Activated B cell treated with CpG ODN at 0.5 μM for 24 hours (primary cell): ENCODE measurements at regions of chr9 and their contacts with region 1.

Region 1: GRCh38 chr9:131627648-131628458 is 82.5 kb downstream of the PRRT1B start:
- DNase-seq: peak; percentile 55
- ATAC-seq: peak; percentile 68
- H3K4me3 Mint-ChIP-seq: peak overlapping the region; percentile 74
- H3K27ac Mint-ChIP-seq: peak overlapping the region; percentile 93
- H3K4me1 Mint-ChIP-seq: peaks cover 71% of the 10 kb centered on the region
- H3K27me3 Mint-ChIP-seq: no peaks in the 10 kb centered on the region
- CTCF ChIP-seq: no peak

Region 2: DNA sequence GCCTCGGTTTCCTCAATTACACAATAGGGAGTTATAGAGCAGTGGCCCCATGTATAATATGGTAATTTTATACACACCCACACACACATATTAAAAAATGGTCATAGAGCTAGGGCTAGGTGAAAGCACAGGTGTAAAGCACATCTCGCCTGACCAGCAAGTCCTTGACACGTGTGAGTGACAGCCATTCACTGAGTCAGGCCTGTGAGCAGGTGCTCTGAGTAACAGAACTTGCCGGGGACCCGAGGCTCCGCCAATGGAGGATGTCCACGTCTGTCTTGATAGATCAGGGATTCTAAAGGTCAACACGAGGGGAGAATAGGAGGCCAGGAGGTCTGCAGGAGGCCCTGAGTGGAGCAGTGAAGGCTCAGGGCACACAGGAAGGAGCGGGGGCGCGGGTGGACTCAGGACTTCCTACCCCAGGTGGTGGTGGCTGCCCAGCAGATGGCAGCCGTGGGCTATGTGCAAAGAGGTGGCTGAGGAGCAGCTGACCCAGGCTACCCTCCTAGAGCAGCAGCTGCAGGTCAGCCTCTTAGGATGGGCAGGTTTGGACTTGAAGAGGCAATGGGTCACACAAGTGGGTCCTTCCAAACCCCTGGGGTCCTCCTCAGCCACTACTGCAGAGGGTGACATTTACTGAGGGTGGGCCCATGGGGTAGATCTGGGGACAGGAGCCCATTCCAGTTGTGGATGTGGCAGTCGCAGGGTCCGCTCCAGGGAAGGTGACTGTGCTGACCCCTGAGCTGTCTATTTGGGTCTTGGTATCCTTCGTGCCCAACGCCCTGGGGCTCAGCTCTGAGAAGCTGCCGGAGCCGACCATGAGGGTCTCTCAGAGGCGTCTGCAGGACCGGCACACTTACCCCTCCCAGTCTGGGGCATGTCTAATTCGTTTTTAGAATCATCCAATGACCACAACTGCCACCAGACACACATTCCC is 36.7 kb before region 1 on chr9:
- CTCF ChIA-PET with region 1: interaction called, 9 read pairs
- POLR2A ChIA-PET with region 1: interaction called, 6 read pairs
- intact Hi-C with region 1: loop called (anchors 2 kb)
- DNase-seq: peak; percentile 67
- ATAC-seq: peak; percentile 88
- H3K4me3 Mint-ChIP-seq: no peak overlapping the region
- H3K27ac Mint-ChIP-seq: peak overlapping the region; percentile 51
- H3K4me1 Mint-ChIP-seq: peaks cover 34% of the 10 kb centered on the region
- H3K27me3 Mint-ChIP-seq: no peaks in the 10 kb centered on the region
- CTCF ChIP-seq: no peak

Region 3: GRCh38 chr9:131656356-131657036 is 28.6 kb after region 1 on chr9:
- CTCF ChIA-PET with region 1: interaction called, 6 read pairs
- POLR2A ChIA-PET with region 1: interaction called, 43 read pairs
- intact Hi-C with region 1: loop called (anchors 1 kb)
- DNase-seq: peak; percentile 70
- ATAC-seq: peak; percentile 97
- H3K4me3 Mint-ChIP-seq: peak overlapping the region; percentile 62
- H3K27ac Mint-ChIP-seq: peak overlapping the region; percentile 93
- H3K4me1 Mint-ChIP-seq: peaks cover 93% of the 10 kb centered on the region
- H3K27me3 Mint-ChIP-seq: no peaks in the 10 kb centered on the region
- CTCF ChIP-seq: no peak

Region 4: GRCh38 chr9:131678499-131679111 is 50.8 kb after region 1 on chr9:
- CTCF ChIA-PET with region 1: interaction called, 17 read pairs
- POLR2A ChIA-PET with region 1: interaction called, 151 read pairs
- intact Hi-C with region 1: loop called (anchors 1 kb)
- DNase-seq: peak; percentile 63
- ATAC-seq: peak; percentile 90
- H3K4me3 Mint-ChIP-seq: peak overlapping the region; percentile 93
- H3K27ac Mint-ChIP-seq: peak overlapping the region; percentile 93
- H3K4me1 Mint-ChIP-seq: peaks cover 98% of the 10 kb centered on the region
- H3K27me3 Mint-ChIP-seq: no peaks in the 10 kb centered on the region
- CTCF ChIP-seq: no peak

Region 5: DNA sequence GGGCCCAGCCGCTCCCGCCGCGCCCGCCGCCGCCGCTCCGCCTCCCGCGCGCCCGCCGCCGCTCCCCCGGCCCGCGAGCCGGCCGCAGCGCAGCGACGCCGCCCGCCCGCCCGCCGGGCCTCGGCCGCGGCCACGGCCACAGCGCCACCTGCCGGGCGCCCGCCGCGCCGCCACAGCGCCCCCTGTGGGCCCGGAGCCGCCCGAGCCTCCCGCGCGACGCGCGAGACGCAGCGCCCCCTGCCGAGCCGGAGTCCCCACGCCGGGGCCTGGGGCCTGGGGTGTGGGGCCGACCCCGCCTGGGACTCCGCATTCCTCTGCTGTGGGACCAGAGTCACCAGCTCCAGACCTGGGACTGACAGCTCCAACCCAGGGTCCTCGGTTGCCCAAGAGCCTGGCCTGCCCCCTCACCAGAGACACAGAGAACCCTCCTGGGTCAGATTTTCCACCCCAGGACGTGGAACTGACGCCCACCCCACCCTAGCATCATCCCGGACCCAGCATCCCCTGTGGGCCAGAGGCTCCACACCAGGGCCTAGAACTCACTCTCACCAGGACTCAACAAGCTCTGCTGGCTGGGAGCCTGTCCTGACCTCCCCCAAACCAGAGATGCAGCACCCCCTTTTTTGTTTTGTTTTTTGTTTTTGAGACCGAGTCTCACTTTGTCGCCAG is 112.3 kb after region 1 on chr9 and contains the start of gene RAPGEF1:
- CTCF ChIA-PET with region 1: interaction called, 36 read pairs
- POLR2A ChIA-PET with region 1: interaction called, 567 read pairs
- intact Hi-C with region 1: loop called (anchors 1 kb)
- DNase-seq: peak; percentile 97
- ATAC-seq: peak; percentile 67
- H3K4me3 Mint-ChIP-seq: peak within 1 kb of the TSS; percentile 93
- H3K27ac Mint-ChIP-seq: peak within 1 kb of the TSS; percentile 78
- H3K4me1 Mint-ChIP-seq: peaks cover 62% of the 10 kb centered on the region
- H3K27me3 Mint-ChIP-seq: no peaks in the 10 kb centered on the region
- CTCF ChIP-seq: peak; percentile 52
- total RNA-seq, gene RAPGEF1: 278 and 318 TPM in 2 replicates

Region 6: DNA sequence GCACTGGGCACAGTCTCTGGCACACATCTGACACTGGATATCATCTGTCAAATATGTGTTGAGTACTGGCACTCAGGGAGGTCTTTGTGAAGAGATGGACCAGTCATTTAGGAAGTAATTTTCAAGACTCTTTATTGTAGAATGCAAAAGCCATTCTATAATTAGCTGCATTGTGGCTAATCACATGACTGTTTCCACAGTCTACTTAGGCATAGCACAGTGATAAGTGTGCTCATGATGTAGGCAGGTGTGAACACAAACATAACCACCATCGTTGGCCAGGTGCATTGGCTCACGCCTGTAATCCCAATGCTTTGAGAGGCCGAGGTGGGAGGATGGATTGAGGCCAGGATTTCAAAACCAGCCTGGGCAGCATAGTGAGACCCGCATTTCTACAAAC is 844.3 kb after region 1 on chr9:
- CTCF ChIA-PET with region 1: no interaction called
- POLR2A ChIA-PET with region 1: no interaction called
- intact Hi-C with region 1: no loop called
- DNase-seq: no peak
- ATAC-seq: no peak
- H3K4me3 Mint-ChIP-seq: no peak overlapping the region
- H3K27ac Mint-ChIP-seq: no peak overlapping the region
- H3K4me1 Mint-ChIP-seq: peaks cover 5% of the 10 kb centered on the region
- H3K27me3 Mint-ChIP-seq: peaks cover 3% of the 10 kb centered on the region
- CTCF ChIP-seq: no peak